ENCODE measurements at regions of chr12 and their contacts with region 1.

Region 1: GRCh38 chr12:120086801-120087621 is 29.5 kb downstream of the RAB35 start:
- DNase-seq: peak; percentile 98 to 100
- H3K4me3 ChIP-seq: peak overlapping the region; percentile 51 to 63
- H3K27ac ChIP-seq: peak overlapping the region; percentile 43 to 62
- H3K4me1 ChIP-seq: peaks cover 4 to 5% of the 10 kb centered on the region in 2 donors
- H3K27me3 ChIP-seq: no peaks in the 10 kb centered on the region
- CTCF ChIP-seq: peak; percentile 92 to 98 (median 96)

Region 2: GRCh38 chr12:119667577-119668323 is 419.3 kb before region 1 on chr12 and contains the start of gene PRKAB1:
- intact Hi-C with region 1: loop called (anchors 5 kb)
- DNase-seq: peak; percentile 83 to 97
- H3K4me3 ChIP-seq: peak within 1 kb of the TSS; percentile 81 to 90
- H3K27ac ChIP-seq: peak within 1 kb of the TSS; percentile 93 to 97
- H3K4me1 ChIP-seq: peaks cover 0 to 22% of the 10 kb centered on the region in 2 donors
- H3K27me3 ChIP-seq: no peaks in the 10 kb centered on the region
- CTCF ChIP-seq: peak; percentile 86 to 96 (median 88)
- total RNA-seq, gene PRKAB1: 41.2 TPM

Region 3: DNA sequence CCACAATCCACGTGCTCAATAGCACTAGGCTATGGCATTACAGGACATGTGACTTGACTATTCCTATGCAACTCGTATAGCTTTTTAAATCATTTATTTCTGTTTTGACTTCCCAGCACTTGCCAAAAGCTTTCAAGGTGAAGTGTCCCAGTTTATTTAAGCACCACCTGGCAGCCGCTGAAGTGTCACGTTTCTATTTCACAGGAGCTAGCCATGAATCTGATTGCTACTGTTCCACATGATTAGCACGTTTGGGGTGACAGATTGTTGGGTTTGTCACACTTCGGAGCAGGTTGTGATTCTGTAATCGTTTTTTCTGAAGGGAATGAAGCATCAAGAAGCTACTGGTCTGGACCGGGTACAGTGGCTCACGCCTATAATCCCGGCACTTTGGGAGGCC is 137.9 kb before region 1 on chr12:
- intact Hi-C with region 1: no loop called
- DNase-seq: no peak
- H3K4me3 ChIP-seq: no peak overlapping the region
- H3K27ac ChIP-seq: no peak overlapping the region
- H3K4me1 ChIP-seq: no peaks in the 10 kb centered on the region
- H3K27me3 ChIP-seq: no peaks in the 10 kb centered on the region
- CTCF ChIP-seq: no peak

Region 4: DNA sequence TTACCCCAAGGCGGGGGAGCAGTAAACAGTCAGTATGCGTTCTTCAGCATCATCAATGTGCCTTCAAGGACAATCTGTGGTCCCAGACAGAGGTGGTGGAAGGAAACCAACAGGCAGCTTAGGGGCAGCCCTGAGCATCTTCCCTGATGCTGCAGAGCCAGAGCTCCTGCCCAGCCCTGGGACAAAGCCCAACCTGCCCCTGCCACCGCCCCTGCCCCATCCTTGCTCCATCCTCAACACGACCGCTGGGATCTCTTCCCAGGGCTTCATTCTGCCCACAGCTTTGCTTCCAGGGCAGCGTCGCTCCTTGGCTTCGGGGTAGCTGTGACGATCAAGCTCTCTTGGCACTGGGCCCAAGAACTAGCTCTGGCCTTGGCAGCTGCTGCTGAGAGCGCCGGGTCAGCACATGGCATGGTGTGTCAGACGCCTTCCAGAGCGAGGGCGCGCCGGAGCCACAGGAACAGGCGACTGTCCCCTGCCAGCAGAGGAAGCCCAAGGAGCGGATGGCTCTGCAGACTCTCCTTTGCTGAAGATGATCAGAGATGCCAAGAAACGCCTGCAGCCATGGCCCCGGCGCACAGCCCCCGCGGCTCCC is 13.5 kb after region 1 on chr12:
- intact Hi-C with region 1: loop called (anchors 1 kb)
- DNase-seq: peak; percentile 27 to 88
- H3K4me3 ChIP-seq: peak overlapping the region in 1 of 2 donors; percentile 11
- H3K27ac ChIP-seq: peak overlapping the region; percentile 5 to 43
- H3K4me1 ChIP-seq: peaks cover 15 to 17% of the 10 kb centered on the region in 2 donors
- H3K27me3 ChIP-seq: no peaks in the 10 kb centered on the region
- CTCF ChIP-seq: no peak

Region 5: GRCh38 chr12:120116792-120117651 is 30.0 kb after region 1 on chr12:
- intact Hi-C with region 1: loop called (anchors 1 kb)
- DNase-seq: peak; percentile 72 to 96
- H3K4me3 ChIP-seq: peak overlapping the region; percentile 87 to 89
- H3K27ac ChIP-seq: peak overlapping the region; percentile 92 to 94
- H3K4me1 ChIP-seq: peaks cover 13 to 31% of the 10 kb centered on the region in 2 donors
- H3K27me3 ChIP-seq: no peaks in the 10 kb centered on the region
- CTCF ChIP-seq: no peak

Region 6: DNA sequence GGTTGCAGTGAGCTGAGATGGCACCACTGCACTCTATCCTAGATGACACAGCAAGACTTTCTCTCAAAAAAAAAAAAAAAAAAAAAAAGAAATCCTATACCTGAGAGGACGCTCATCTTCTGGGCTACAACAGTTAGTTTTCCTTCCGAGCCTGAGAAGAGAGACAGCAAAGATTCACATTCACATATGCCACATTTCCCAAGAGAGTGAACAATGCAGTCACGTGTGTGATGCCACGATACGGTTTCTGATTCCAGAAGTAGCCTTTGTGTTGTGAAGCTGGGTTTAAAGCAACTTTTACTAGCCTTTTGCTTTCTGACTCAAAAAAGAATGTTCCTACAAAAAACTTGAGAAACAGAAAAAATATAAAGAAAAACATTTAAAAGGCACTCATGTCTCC is 88.1 kb after region 1 on chr12:
- intact Hi-C with region 1: no loop called
- DNase-seq: no peak
- H3K4me3 ChIP-seq: no peak overlapping the region
- H3K27ac ChIP-seq: no peak overlapping the region
- H3K4me1 ChIP-seq: no peaks in the 10 kb centered on the region
- H3K27me3 ChIP-seq: no peaks in the 10 kb centered on the region
- CTCF ChIP-seq: no peak

Measured in ascending aorta (tissue), 2 donors.